ENCODE measurements at regions of chr1 and their contacts with region 1.

Region 1: DNA sequence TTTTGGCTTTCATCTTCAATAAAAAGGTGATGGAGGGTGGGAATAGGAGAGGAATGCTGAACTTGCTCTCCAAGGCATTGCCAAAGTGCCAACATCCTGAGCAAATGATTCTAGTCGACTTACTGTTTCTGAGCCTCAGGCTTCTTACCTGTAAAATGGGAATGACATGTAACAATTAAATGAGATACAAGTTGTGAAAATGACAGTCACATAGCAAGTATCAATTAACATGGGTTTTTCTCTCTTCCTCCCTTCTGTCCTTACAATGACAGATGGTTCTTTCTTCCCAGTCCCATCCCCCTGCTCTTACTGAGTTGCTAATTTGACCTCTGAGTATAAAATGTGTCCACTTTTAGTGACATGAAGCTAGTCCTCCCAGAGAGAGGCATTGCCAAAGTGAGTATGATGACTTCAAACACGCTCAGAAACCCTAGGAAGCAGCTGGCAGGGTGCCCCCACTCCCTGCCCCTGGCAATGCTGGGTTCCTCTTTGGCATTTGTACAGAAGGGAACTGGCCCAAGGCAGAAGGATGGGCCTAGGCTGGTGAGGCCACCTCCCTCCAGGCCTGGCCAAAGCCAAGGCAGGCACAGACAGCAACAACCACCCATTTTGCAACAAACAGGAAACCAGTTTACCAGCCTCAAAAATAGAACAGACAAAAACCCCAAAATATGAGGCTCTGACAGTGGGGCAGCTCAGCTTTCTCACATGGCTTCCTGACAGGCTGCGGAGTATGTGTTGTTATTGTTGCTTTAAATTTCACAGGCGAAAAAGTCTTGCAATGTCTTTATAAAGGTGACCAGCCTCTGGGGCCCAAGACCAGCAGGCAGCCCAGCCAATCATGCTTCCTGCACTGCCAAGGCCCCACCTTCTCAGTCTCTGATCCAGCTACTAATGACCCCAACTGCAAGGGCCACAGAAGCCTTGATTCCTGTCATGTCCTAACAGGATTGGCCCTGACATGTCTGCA is 115.9 kb downstream of the HIVEP3 start:
- DNase-seq: peak; percentile 69
- ATAC-seq: peak; percentile 45
- H3K4me3 Mint-ChIP-seq: peak overlapping the region; percentile 34
- H3K27ac Mint-ChIP-seq: peak overlapping the region; percentile 86
- H3K4me1 Mint-ChIP-seq: peaks cover 87% of the 10 kb centered on the region
- H3K27me3 Mint-ChIP-seq: no peaks in the 10 kb centered on the region

Region 2: DNA sequence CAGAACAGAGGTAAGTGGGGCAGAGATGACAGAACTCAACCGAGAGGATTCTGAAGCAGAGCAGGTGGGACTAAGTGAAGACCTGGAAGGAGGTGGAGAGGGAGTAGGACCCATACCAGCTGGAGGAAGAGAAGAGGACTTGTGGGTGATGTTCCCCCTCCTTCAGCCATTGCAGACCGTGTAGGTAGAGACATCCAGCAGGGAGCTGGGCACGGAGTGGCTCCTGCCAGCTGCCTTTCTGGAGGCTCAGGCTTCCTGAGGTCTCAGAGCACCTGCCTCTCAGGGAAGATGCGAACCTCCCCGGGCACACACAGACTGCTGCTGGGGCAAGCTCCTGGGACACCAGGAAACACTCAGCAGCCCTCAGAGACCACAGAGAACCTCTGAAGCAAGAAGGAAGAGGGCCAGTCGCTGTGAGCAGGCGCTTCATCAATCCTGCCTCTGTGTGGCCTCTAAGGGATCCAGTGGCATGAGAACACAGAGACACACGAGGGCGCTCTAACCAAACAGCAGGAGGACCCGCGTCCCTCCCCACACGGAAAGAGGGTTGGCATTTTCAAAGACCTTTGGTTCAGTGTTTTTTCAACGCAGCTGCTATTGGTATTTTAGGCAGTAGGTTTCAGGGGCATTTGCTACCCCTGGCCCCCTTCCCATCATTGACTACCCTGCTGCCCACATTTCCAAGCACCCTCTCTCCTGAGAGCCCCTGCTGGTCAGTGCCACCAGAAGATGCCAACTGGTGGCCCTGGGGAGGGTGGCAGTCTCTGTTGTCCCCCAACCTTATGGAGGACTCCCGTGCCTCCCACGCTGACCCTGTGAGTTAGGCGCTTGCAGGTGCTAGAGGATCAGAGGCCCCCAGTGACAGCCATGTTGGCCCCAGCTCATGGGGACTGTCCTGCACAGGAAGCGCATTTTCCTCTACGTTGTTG is 228.8 kb before region 1 on chr1:
- CTCF ChIA-PET with region 1: interaction called, 13 read pairs
- DNase-seq: peak; percentile 90
- ATAC-seq: peak; percentile 99
- H3K4me3 Mint-ChIP-seq: no peak overlapping the region
- H3K27ac Mint-ChIP-seq: peak overlapping the region; percentile 13
- H3K4me1 Mint-ChIP-seq: peaks cover 18% of the 10 kb centered on the region
- H3K27me3 Mint-ChIP-seq: no peaks in the 10 kb centered on the region

Region 3: GRCh38 chr1:41728403-41729202 is 74.2 kb before region 1 on chr1:
- CTCF ChIA-PET with region 1: interaction called, 10 read pairs
- DNase-seq: peak; percentile 82
- ATAC-seq: peak; percentile 74
- H3K4me3 Mint-ChIP-seq: no peak overlapping the region
- H3K27ac Mint-ChIP-seq: no peak overlapping the region
- H3K4me1 Mint-ChIP-seq: peaks cover 34% of the 10 kb centered on the region
- H3K27me3 Mint-ChIP-seq: no peaks in the 10 kb centered on the region

Region 4: GRCh38 chr1:41791667-41792484 is 10.9 kb before region 1 on chr1:
- CTCF ChIA-PET with region 1: interaction called, 22 read pairs
- DNase-seq: peak; percentile 80
- ATAC-seq: peak; percentile 79
- H3K4me3 Mint-ChIP-seq: peak overlapping the region; percentile 30
- H3K27ac Mint-ChIP-seq: peak overlapping the region; percentile 95
- H3K4me1 Mint-ChIP-seq: peaks cover 53% of the 10 kb centered on the region
- H3K27me3 Mint-ChIP-seq: no peaks in the 10 kb centered on the region

Region 5: DNA sequence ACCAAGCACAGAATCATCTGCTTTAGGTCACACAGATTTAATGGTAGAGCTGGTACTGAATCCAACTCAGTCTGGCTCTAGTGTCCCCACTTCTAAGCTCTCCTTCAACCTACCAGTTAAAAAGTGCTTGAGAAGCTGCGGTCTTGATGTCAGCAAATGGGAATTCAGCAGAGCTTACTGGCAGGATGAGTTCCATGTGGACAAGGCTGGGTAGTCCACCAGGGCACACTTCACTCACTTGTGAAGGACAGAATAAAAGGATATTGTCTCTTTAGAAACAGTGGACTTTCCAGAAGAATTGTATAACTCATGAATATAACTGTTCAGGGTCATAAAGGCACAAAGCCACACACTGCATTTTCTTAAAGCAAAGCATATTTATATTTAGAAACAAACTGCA is 315.3 kb after region 1 on chr1:
- CTCF ChIA-PET with region 1: no interaction called
- DNase-seq: no peak
- ATAC-seq: no peak
- H3K4me3 Mint-ChIP-seq: no peak overlapping the region
- H3K27ac Mint-ChIP-seq: no peak overlapping the region
- H3K4me1 Mint-ChIP-seq: no peaks in the 10 kb centered on the region
- H3K27me3 Mint-ChIP-seq: peaks cover 18% of the 10 kb centered on the region

Measured in activated CD8-positive, alpha-beta memory T cell treated with anti-CD3 and anti-CD28 coated beads, Interleukin-2, amount 10 ng/mL, durations not matched to agents 7 days and 5 days (primary cell).